Endothelial cell of umbilical vein (primary cell): ENCODE measurements at regions of chr19 and their contacts with region 1.

Region 1: DNA sequence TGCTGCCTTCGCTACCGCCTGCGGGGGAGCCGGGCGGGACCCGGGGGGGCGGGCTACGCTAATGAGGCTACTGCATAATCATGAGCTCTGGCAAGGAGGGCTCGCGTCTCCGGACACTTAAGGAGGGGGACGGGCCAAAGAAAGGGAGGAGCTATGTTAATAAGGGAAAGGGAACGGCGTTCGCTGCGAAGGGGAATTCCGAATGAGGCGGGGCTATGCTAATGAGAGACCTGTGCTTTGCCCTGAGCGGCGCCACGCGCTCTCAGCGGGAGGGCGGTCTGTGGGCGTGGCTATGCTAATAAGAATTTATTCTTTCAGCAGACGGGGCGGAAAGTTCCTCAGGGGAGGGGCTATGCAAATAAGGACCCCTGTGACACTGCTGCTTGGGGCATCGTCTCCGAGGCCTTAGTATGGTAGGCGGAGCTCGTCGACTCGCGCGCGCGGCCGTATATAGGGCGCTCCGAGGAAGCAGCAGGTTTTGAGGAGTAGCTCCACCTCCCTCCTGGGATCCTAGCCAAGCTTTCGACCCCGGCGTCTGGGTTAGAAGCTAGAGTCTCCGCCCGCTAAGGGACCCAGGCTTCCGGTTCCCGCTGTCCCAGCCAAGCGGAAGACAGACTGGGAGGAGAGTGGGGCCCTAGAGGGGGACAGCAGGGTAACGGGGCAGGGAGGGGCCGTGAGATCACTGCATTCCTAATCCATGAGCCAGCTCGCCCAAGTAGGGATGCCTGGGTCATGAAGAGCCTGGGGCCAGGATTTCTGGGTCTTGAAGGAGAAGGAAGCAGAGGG is at the start of gene RRAS:
- DNase-seq: peak; percentile 100
- H3K4me3 ChIP-seq: peak within 1 kb of the TSS; percentile 57 to 83 (median 72)
- H3K27ac ChIP-seq: peak within 1 kb of the TSS; percentile 99
- H3K4me1 ChIP-seq: peaks cover 33% of the 10 kb centered on the region
- H3K27me3 ChIP-seq: no peaks in the 10 kb centered on the region
- CTCF ChIP-seq: no peak
- POLR2A ChIP-seq: peak; percentile 93
- total RNA-seq, gene RRAS: 84.8 and 89.5 TPM in 2 replicates

Region 2: GRCh38 chr19:49487277-49488045 is 152.8 kb before region 1 on chr19 and contains the start of gene RPL13A:
- CTCF ChIA-PET with region 1: no interaction called
- POLR2A ChIA-PET with region 1: interaction called, 5 read pairs
- dilution Hi-C with region 1: no loop called
- intact Hi-C with region 1: loop called (anchors 2 kb)
- DNase-seq: peak; percentile 100
- H3K4me3 ChIP-seq: peak within 1 kb of the TSS; percentile 60 to 94 (median 90)
- H3K27ac ChIP-seq: peak within 1 kb of the TSS; percentile 89
- H3K4me1 ChIP-seq: peaks cover 12% of the 10 kb centered on the region
- H3K27me3 ChIP-seq: no peaks in the 10 kb centered on the region
- CTCF ChIP-seq: no peak
- POLR2A ChIP-seq: peak; percentile 99
- total RNA-seq, gene RPL13A: 2,291 and 2,318 TPM in 2 replicates

Region 3: DNA sequence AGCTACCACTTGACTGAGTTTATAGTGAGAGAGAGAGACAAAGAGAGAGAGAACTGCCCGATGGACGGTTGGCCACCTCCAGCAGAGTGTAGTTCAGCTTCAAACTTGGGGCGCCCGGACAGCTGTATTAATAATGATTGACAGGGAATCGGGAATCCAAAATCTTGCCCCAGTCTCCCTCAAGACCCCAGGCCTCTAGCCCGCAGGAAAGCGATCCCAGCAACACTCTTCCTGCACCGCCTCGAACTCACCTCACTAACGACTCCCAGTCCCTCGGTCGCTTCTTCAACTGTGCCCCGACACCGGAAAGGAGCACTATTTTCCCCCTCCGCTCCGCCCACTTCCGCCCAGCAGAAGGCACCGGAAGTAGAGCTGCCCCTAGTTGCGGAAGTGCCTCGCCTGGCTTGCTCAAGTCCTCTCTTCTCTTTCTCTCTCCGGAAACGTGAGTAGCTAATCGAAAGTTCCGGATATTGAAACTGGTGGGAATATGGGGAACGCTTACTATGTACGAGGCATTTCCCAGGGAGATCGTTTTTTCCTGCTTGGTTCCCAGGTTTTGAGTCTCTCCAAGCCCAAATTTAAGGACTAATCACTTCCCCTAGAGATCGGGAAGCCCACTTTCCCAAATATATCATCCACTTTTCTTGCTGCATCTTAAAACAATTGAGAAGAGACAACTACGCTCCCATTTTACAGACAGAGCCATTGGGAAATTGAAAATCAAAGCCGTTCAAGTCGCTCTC is 59.9 kb before region 1 on chr19 and contains the start of gene NOSIP:
- CTCF ChIA-PET with region 1: interaction called, 4 read pairs
- POLR2A ChIA-PET with region 1: interaction called, 11 read pairs
- dilution Hi-C with region 1: no loop called
- intact Hi-C with region 1: loop called (anchors 1 kb)
- DNase-seq: peak; percentile 94
- H3K4me3 ChIP-seq: peak within 1 kb of the TSS; percentile 44 to 84 (median 61)
- H3K27ac ChIP-seq: peak within 1 kb of the TSS; percentile 21
- H3K4me1 ChIP-seq: peaks cover 15% of the 10 kb centered on the region
- H3K27me3 ChIP-seq: no peaks in the 10 kb centered on the region
- CTCF ChIP-seq: no peak
- POLR2A ChIP-seq: peak; percentile 99
- total RNA-seq, gene NOSIP: 77.5 and 79.8 TPM in 2 replicates

Region 4: GRCh38 chr19:49614096-49614833 is 26.0 kb before region 1 on chr19:
- CTCF ChIA-PET with region 1: interaction called, 5 read pairs
- POLR2A ChIA-PET with region 1: interaction called, 4 read pairs
- dilution Hi-C with region 1: no loop called
- intact Hi-C with region 1: loop called (anchors 1 kb)
- DNase-seq: peak; percentile 94
- H3K4me3 ChIP-seq: no peak overlapping the region
- H3K27ac ChIP-seq: peak overlapping the region; percentile 71
- H3K4me1 ChIP-seq: peaks cover 23% of the 10 kb centered on the region
- H3K27me3 ChIP-seq: no peaks in the 10 kb centered on the region
- CTCF ChIP-seq: peak in 1 of 2 donors; percentile 13
- POLR2A ChIP-seq: no peak

Region 5: DNA sequence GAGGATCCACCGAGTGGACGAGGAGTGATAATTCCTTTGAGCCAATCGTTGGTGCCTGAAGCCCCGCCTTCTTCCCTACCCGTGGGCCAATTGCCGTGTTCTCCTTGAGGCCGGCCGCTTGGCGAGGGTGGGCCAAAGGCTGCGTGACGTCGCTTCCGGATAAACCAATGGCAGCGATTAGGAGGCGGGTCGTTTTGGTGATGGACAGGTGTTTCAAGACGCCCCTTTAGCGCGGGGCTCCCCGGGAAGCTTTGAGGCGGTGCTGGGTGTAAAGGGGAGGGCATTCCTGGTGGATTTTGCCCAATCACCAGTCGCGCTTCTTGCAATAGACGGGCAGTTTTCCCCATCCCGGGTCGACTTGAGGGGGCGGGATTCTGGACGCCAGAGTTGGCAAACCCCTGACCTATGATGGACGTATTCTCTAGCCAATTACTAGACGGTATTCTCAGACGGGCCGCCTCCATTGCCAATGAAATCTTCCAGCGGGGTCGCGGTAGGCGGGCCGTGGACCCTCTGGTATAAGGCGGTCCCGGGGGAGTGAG is 36.5 kb after region 1 on chr19:
- CTCF ChIA-PET with region 1: interaction called, 5 read pairs
- POLR2A ChIA-PET with region 1: interaction called, 15 read pairs
- dilution Hi-C with region 1: no loop called
- intact Hi-C with region 1: loop called (anchors 1 kb)
- DNase-seq: peak; percentile 100
- H3K4me3 ChIP-seq: peak overlapping the region; percentile 69 to 97 (median 78)
- H3K27ac ChIP-seq: peak overlapping the region; percentile 95
- H3K4me1 ChIP-seq: peaks cover 25% of the 10 kb centered on the region
- H3K27me3 ChIP-seq: no peaks in the 10 kb centered on the region
- CTCF ChIP-seq: no peak
- POLR2A ChIP-seq: no peak

Region 6: GRCh38 chr19:49877020-49877878 is 236.9 kb after region 1 on chr19 and contains the starts of genes AKT1S1 and TBC1D17:
- CTCF ChIA-PET with region 1: no interaction called
- POLR2A ChIA-PET with region 1: no interaction called
- dilution Hi-C with region 1: no loop called
- intact Hi-C with region 1: loop called (anchors 2 kb)
- DNase-seq: peak; percentile 100
- H3K4me3 ChIP-seq: peak within 1 kb of the TSS; percentile 38 to 81 (median 70)
- H3K27ac ChIP-seq: peak within 1 kb of the TSS; percentile 84
- H3K4me1 ChIP-seq: peaks cover 14% of the 10 kb centered on the region
- H3K27me3 ChIP-seq: no peaks in the 10 kb centered on the region
- CTCF ChIP-seq: no peak
- POLR2A ChIP-seq: peak; percentile 84
- total RNA-seq, gene AKT1S1: 61.9 and 64.2 TPM in 2 replicates
- total RNA-seq, gene TBC1D17: 36.1 and 39.3 TPM in 2 replicates

Region 7: GRCh38 chr19:50050384-50051224 is 410.3 kb after region 1 on chr19:
- CTCF ChIA-PET with region 1: no interaction called
- POLR2A ChIA-PET with region 1: no interaction called
- dilution Hi-C with region 1: no loop called
- intact Hi-C with region 1: no loop called
- DNase-seq: peak; percentile 61
- H3K4me3 ChIP-seq: peak overlapping the region in 2 of 3 experiments; percentile 32 to 35
- H3K27ac ChIP-seq: no peak overlapping the region
- H3K4me1 ChIP-seq: no peaks in the 10 kb centered on the region
- H3K27me3 ChIP-seq: no peaks in the 10 kb centered on the region
- CTCF ChIP-seq: no peak
- POLR2A ChIP-seq: no peak